Activated B cell treated with CpG ODN at 0.5 μM for 24 hours (primary cell): ENCODE measurements at regions of chr12 and their contacts with region 1.

Region 1: GRCh38 chr12:62192180-62192902 is 67.9 kb upstream of the USP15 start:
- DNase-seq: peak; percentile 27
- ATAC-seq: peak; percentile 82
- H3K4me3 Mint-ChIP-seq: peak overlapping the region; percentile 79
- H3K27ac Mint-ChIP-seq: no peak overlapping the region
- H3K4me1 Mint-ChIP-seq: peaks cover 33% of the 10 kb centered on the region
- H3K27me3 Mint-ChIP-seq: peaks cover 28% of the 10 kb centered on the region
- CTCF ChIP-seq: peak; percentile 56

Region 2: GRCh38 chr12:61654698-61655097 is 537.6 kb before region 1 on chr12:
- CTCF ChIA-PET with region 1: no interaction called
- POLR2A ChIA-PET with region 1: no interaction called
- intact Hi-C with region 1: loop called (anchors 10 kb)
- DNase-seq: no peak
- ATAC-seq: no peak
- H3K4me3 Mint-ChIP-seq: no peak overlapping the region
- H3K27ac Mint-ChIP-seq: no peak overlapping the region
- H3K4me1 Mint-ChIP-seq: no peaks in the 10 kb centered on the region
- H3K27me3 Mint-ChIP-seq: no peaks in the 10 kb centered on the region
- CTCF ChIP-seq: no peak

Region 3: GRCh38 chr12:62006076-62006732 is 186.1 kb before region 1 on chr12:
- CTCF ChIA-PET with region 1: no interaction called
- POLR2A ChIA-PET with region 1: no interaction called
- intact Hi-C with region 1: loop called (anchors 2 kb)
- DNase-seq: no peak
- ATAC-seq: no peak
- H3K4me3 Mint-ChIP-seq: no peak overlapping the region
- H3K27ac Mint-ChIP-seq: no peak overlapping the region
- H3K4me1 Mint-ChIP-seq: no peaks in the 10 kb centered on the region
- H3K27me3 Mint-ChIP-seq: no peaks in the 10 kb centered on the region
- CTCF ChIP-seq: no peak

Region 4: GRCh38 chr12:62123721-62124203 is 68.6 kb before region 1 on chr12:
- CTCF ChIA-PET with region 1: no interaction called
- POLR2A ChIA-PET with region 1: no interaction called
- intact Hi-C with region 1: loop called (anchors 2 kb)
- DNase-seq: no peak
- ATAC-seq: peak; percentile 52
- H3K4me3 Mint-ChIP-seq: no peak overlapping the region
- H3K27ac Mint-ChIP-seq: no peak overlapping the region
- H3K4me1 Mint-ChIP-seq: no peaks in the 10 kb centered on the region
- H3K27me3 Mint-ChIP-seq: peaks cover 5% of the 10 kb centered on the region
- CTCF ChIP-seq: no peak

Region 5: DNA sequence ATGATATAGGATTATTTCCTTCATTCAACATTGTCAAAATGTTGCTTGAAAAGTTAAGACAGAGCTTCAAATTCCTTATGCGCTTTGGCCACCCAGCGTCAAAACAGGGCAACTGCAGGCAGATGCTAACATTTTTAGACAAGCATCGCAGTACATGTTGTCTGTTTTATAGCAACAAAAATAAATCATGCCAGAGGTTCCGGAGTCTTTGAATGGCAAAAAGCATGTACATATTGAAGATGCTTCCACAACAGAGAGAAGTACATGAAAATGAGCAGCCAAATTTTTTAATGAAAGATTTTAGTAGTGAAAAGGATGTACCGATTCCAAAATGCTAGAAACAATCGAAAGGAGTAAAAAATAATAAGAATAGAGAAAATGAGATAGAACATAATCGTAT is 18.1 kb after region 1 on chr12:
- CTCF ChIA-PET with region 1: interaction called, 11 read pairs
- POLR2A ChIA-PET with region 1: no interaction called
- intact Hi-C with region 1: no loop called
- DNase-seq: no peak
- ATAC-seq: no peak
- H3K4me3 Mint-ChIP-seq: no peak overlapping the region
- H3K27ac Mint-ChIP-seq: no peak overlapping the region
- H3K4me1 Mint-ChIP-seq: peaks cover 2% of the 10 kb centered on the region
- H3K27me3 Mint-ChIP-seq: peaks cover 7% of the 10 kb centered on the region
- CTCF ChIP-seq: no peak

Region 6: GRCh38 chr12:62834971-62835547 is 642.7 kb after region 1 on chr12:
- CTCF ChIA-PET with region 1: no interaction called
- POLR2A ChIA-PET with region 1: no interaction called
- intact Hi-C with region 1: no loop called
- DNase-seq: no peak
- ATAC-seq: no peak
- H3K4me3 Mint-ChIP-seq: no peak overlapping the region
- H3K27ac Mint-ChIP-seq: no peak overlapping the region
- H3K4me1 Mint-ChIP-seq: no peaks in the 10 kb centered on the region
- H3K27me3 Mint-ChIP-seq: no peaks in the 10 kb centered on the region
- CTCF ChIP-seq: no peak